ENCODE measurements at regions of chr11 and their contacts with region 1.

Region 1: DNA sequence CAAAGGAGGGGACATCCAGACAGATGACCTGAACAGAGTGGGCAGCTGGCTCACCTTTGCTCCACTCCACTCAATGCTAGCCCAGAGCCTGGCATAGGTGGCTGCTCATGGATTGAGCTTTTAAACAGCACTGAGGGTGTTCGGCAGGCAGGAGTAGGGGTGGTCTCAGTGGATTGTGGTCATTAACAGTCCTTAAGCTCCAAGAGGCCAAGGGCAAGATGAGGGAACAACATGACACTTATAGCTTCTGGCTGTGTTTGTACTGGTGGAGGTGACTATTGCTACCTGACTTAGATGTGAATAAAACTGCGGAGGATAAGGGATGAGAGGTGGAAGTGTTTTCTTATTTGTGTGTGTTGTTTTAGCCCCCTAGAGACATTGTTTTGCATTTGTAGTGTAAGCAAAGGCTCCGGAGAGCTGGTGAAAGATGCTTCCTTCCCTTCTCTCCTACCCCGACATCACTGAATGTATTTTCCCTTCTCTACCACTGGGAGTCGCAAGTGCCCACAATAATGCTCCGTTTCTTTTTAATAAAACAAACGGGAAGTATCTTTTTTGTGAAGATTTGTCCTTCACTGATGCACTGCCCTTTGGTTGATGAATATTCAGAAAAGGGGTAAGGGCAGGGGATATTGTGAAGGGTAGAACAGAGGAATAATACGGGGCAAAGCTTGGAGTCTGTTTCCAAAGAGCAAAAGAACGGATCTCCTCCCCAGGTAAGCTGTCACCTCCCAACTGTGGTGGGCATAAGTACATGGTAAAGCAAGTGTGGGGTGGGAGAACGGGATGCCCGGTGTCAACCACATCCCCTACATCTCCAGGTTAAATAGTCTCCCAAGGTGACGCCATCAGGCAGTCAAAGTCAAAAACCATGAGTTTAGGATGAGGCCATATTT is 27.5 kb upstream of the MTNR1B start:
- DNase-seq: peak; percentile 18
- ATAC-seq: peak; percentile 81
- H3K4me3 ChIP-seq: no peak overlapping the region
- H3K27ac ChIP-seq: no peak overlapping the region
- H3K4me1 ChIP-seq: no peaks in the 10 kb centered on the region
- H3K27me3 ChIP-seq: no peaks in the 10 kb centered on the region
- CTCF ChIP-seq: peak; percentile 69 to 84 (median 71)
- POLR2A ChIP-seq: no peak
- RAD21 ChIP-seq: peak; percentile 87

Region 2: GRCh38 chr11:92931746-92932422 is 10.0 kb before region 1 on chr11:
- CTCF ChIA-PET with region 1: no interaction called
- POLR2A ChIA-PET with region 1: no interaction called
- RAD21 ChIA-PET with region 1: no interaction called
- intact Hi-C with region 1: no loop called
- DNase-seq: no peak
- ATAC-seq: no peak
- H3K4me3 ChIP-seq: no peak overlapping the region
- H3K27ac ChIP-seq: no peak overlapping the region
- H3K4me1 ChIP-seq: no peaks in the 10 kb centered on the region
- H3K27me3 ChIP-seq: no peaks in the 10 kb centered on the region
- CTCF ChIP-seq: no peak
- POLR2A ChIP-seq: no peak
- RAD21 ChIP-seq: no peak

Region 3: DNA sequence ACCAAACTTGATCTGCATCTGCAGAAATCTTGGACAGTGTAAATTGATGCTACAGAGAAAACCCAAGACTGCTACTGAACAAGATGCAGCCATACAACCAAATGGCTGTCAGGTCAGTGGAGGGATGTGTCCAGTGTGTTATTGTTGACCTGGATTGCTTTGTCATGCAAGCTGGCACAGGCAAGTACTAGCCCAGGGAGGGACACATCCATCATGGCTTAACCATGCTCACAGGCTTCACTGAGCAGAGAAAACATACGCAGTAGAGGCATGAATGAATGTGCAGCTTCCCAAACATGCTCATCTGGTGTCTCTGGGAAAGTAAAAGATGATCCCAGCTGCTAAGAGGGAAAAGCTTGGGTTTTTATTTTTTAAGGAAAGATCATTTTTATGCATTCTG is 121.2 kb after region 1 on chr11:
- CTCF ChIA-PET with region 1: interaction called, 25 read pairs
- POLR2A ChIA-PET with region 1: interaction called, 3 read pairs
- RAD21 ChIA-PET with region 1: interaction called, 8 to 9 read pairs
- intact Hi-C with region 1: loop called (anchors 2 kb)
- DNase-seq: no peak
- ATAC-seq: no peak
- H3K4me3 ChIP-seq: no peak overlapping the region
- H3K27ac ChIP-seq: no peak overlapping the region
- H3K4me1 ChIP-seq: 0 out of 4 replicates have a peak, but pooled peaks cover 0 to 4% of the 10 kb centered on the region in 2 experiments
- H3K27me3 ChIP-seq: no peaks in the 10 kb centered on the region
- CTCF ChIP-seq: no peak
- POLR2A ChIP-seq: no peak
- RAD21 ChIP-seq: no peak

Region 4: DNA sequence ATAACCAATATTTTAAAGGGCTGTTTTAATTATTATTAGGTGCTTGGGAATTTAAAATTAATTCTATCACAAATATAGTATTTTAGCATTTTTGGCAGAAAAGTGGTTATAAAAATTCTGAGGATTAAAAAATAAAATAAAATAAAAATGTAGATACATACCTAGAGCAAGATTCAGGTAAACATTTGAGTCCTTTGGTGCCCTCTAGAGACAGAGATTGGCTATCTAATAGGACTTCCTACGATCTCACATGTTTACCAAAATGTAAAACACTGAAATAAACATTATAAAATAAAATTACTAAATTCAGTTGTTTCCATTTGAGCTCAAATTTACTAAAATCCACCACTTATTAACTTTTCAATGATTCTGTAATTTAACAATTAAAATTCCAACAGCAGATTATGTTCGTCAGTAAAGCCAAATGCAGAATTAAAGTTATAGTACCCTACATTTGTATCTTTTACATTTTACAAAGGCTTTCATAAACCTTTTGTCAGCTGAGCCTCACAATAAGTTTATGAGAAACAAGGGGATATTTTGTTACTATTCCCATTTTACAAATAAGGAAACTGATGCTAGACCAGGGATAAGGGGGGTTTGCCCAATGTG is 228.1 kb after region 1 on chr11:
- CTCF ChIA-PET with region 1: interaction called, 9 read pairs
- POLR2A ChIA-PET with region 1: no interaction called
- RAD21 ChIA-PET with region 1: no interaction called
- intact Hi-C with region 1: loop called (anchors 1 kb)
- DNase-seq: peak; percentile 22
- ATAC-seq: peak; percentile 65; the same call in 1 of the 2 replicates
- H3K4me3 ChIP-seq: no peak overlapping the region
- H3K27ac ChIP-seq: no peak overlapping the region
- H3K4me1 ChIP-seq: no peaks in the 10 kb centered on the region
- H3K27me3 ChIP-seq: no peaks in the 10 kb centered on the region
- CTCF ChIP-seq: peak in 2 of 3 experiments; percentile 38 to 53; a peak in 4 of 6 replicates
- POLR2A ChIP-seq: no peak
- RAD21 ChIP-seq: peak; percentile 53

Region 5: GRCh38 chr11:93225662-93226061 is 283.7 kb after region 1 on chr11:
- CTCF ChIA-PET with region 1: interaction called, 38 read pairs
- POLR2A ChIA-PET with region 1: no interaction called
- RAD21 ChIA-PET with region 1: interaction called, 4 to 6 read pairs
- intact Hi-C with region 1: loop called (anchors 1 kb)
- DNase-seq: peak; percentile 13
- ATAC-seq: 0 out of 2 replicates have a peak, but pooled peaks have one; percentile 36
- H3K4me3 ChIP-seq: no peak overlapping the region
- H3K27ac ChIP-seq: no peak overlapping the region
- H3K4me1 ChIP-seq: peaks cover 0 to 5% of the 10 kb centered on the region in 2 experiments; a peak in 1 of 4 replicates
- H3K27me3 ChIP-seq: no peaks in the 10 kb centered on the region
- CTCF ChIP-seq: peak in 2 of 3 experiments; percentile 47 to 50; a peak in 3 of 6 replicates
- POLR2A ChIP-seq: no peak
- RAD21 ChIP-seq: peak; percentile 70

Region 6: DNA sequence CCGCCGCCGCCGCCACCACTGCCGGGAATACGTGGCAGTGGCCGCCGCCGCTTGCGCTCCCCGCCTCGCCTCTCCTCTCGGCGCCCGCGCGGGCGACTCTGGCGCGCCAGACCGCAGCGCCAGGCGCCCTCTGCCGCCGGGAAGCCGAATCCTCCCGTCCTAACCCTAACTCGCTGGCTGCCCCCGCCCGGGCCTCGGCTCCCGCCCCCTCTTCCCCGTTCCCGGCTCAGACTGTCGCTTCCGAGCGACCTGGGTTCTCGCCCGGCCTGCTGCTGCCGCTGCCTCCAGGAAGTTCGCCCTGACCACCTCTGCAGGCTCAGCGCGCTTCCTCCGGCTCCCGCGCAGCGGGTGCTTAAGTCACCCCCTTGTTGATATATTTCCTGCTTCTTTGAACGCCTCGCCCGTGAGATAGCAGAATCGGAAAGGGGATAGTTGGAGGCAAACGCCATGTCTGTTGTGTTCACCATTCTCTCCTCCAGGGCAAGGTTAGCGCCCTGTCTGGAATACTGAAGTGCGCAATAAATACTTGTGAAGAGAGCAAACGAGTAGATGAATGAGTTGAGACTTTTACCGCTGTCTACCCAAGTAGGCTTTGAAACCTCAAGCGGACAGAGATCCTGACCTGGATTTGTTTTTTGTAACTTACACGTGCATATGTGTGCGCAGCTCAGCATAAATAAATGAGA is 601.5 kb after region 1 on chr11 and contains the start of gene SMCO4:
- CTCF ChIA-PET with region 1: no interaction called
- POLR2A ChIA-PET with region 1: no interaction called
- RAD21 ChIA-PET with region 1: no interaction called
- intact Hi-C with region 1: loop called (anchors 5 kb)
- DNase-seq: peak; percentile 58
- ATAC-seq: peak; percentile 88
- H3K4me3 ChIP-seq: peak within 1 kb of the TSS; percentile 74 to 89
- H3K27ac ChIP-seq: peak within 1 kb of the TSS; percentile 52
- H3K4me1 ChIP-seq: peaks cover 17 to 25% of the 10 kb centered on the region in 2 experiments
- H3K27me3 ChIP-seq: no peaks in the 10 kb centered on the region
- CTCF ChIP-seq: peak; percentile 44 to 67 (median 48)
- POLR2A ChIP-seq: no peak
- RAD21 ChIP-seq: peak; percentile 65
- total RNA-seq, gene SMCO4: 23.1 TPM

Measured in HCT116 (cell line).